Activated CD4-positive, alpha-beta memory T cell treated with anti-CD3 and anti-CD28 coated beads, Interleukin-2, amount 10 ng/mL, durations not matched to agents 7 days and 5 days (primary cell): ENCODE measurements at regions of chr19 and their contacts with region 1.

Region 1: GRCh38 chr19:24033301-24033962 is 53.6 kb upstream of the ZNF254 start:
- DNase-seq: peak; percentile 87
- H3K4me3 Mint-ChIP-seq: peak overlapping the region; percentile 99
- H3K27ac Mint-ChIP-seq: peak overlapping the region; percentile 97
- H3K4me1 Mint-ChIP-seq: peaks cover 25% of the 10 kb centered on the region
- H3K27me3 Mint-ChIP-seq: no peaks in the 10 kb centered on the region

Region 2: GRCh38 chr19:23686621-23687423 is 346.6 kb before region 1 on chr19 and contains the start of gene ZNF675:
- CTCF ChIA-PET with region 1: no interaction called
- POLR2A ChIA-PET with region 1: interaction called, 11 read pairs
- DNase-seq: peak; percentile 91
- H3K4me3 Mint-ChIP-seq: peak within 1 kb of the TSS; percentile 98
- H3K27ac Mint-ChIP-seq: peak within 1 kb of the TSS; percentile 96
- H3K4me1 Mint-ChIP-seq: peaks cover 18% of the 10 kb centered on the region
- H3K27me3 Mint-ChIP-seq: no peaks in the 10 kb centered on the region
- total RNA-seq, gene ZNF675: 18.1 to 19.9 TPM

Region 3: GRCh38 chr19:23876261-23876660 is 157.2 kb before region 1 on chr19:
- CTCF ChIA-PET with region 1: no interaction called
- POLR2A ChIA-PET with region 1: no interaction called
- DNase-seq: no peak
- H3K4me3 Mint-ChIP-seq: no peak overlapping the region
- H3K27ac Mint-ChIP-seq: no peak overlapping the region
- H3K4me1 Mint-ChIP-seq: no peaks in the 10 kb centered on the region
- H3K27me3 Mint-ChIP-seq: no peaks in the 10 kb centered on the region

Region 4: GRCh38 chr19:23914402-23915301 is 118.8 kb before region 1 on chr19 and contains the start of gene ZNF726:
- CTCF ChIA-PET with region 1: no interaction called
- POLR2A ChIA-PET with region 1: interaction called, 23 read pairs
- DNase-seq: peak; percentile 89
- H3K4me3 Mint-ChIP-seq: peak within 1 kb of the TSS; percentile 93
- H3K27ac Mint-ChIP-seq: peak within 1 kb of the TSS; percentile 89
- H3K4me1 Mint-ChIP-seq: peaks cover 16% of the 10 kb centered on the region
- H3K27me3 Mint-ChIP-seq: no peaks in the 10 kb centered on the region
- total RNA-seq, gene ZNF726: 8.7 to 9.7 TPM

Region 5: DNA sequence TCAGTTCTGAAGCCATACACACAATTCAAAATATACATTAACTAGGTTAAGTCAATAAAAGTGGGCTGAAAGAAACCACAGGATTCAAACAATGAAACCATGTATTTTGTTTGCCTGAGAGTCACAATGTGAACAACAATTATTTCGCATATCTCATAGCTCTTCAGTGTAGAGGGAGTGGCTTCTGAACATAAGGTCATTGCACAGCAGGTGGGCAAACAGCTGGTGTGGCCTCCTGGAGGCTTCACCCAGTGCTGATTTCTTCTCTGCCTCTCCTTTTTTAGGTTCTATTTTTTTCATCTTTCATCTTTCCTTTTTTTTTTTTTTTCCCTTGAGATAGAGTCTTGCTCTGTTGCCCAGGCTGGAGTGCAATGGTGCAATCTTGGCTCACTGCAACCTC is 13.1 kb after region 1 on chr19:
- CTCF ChIA-PET with region 1: no interaction called
- POLR2A ChIA-PET with region 1: interaction called, 19 read pairs
- DNase-seq: no peak
- H3K4me3 Mint-ChIP-seq: no peak overlapping the region
- H3K27ac Mint-ChIP-seq: no peak overlapping the region
- H3K4me1 Mint-ChIP-seq: no peaks in the 10 kb centered on the region
- H3K27me3 Mint-ChIP-seq: no peaks in the 10 kb centered on the region

Region 6: GRCh38 chr19:24086974-24087595 is 53.7 kb after region 1 on chr19 and contains the start of gene ZNF254:
- CTCF ChIA-PET with region 1: interaction called, 4 read pairs
- POLR2A ChIA-PET with region 1: interaction called, 42 read pairs
- DNase-seq: peak; percentile 85
- H3K4me3 Mint-ChIP-seq: peak within 1 kb of the TSS; percentile 93
- H3K27ac Mint-ChIP-seq: peak within 1 kb of the TSS; percentile 92
- H3K4me1 Mint-ChIP-seq: peaks cover 11% of the 10 kb centered on the region
- H3K27me3 Mint-ChIP-seq: no peaks in the 10 kb centered on the region
- total RNA-seq, gene ZNF254: 9.9 to 10.2 TPM